ENCODE measurements at regions of chr3 and their contacts with region 1.

Region 1: DNA sequence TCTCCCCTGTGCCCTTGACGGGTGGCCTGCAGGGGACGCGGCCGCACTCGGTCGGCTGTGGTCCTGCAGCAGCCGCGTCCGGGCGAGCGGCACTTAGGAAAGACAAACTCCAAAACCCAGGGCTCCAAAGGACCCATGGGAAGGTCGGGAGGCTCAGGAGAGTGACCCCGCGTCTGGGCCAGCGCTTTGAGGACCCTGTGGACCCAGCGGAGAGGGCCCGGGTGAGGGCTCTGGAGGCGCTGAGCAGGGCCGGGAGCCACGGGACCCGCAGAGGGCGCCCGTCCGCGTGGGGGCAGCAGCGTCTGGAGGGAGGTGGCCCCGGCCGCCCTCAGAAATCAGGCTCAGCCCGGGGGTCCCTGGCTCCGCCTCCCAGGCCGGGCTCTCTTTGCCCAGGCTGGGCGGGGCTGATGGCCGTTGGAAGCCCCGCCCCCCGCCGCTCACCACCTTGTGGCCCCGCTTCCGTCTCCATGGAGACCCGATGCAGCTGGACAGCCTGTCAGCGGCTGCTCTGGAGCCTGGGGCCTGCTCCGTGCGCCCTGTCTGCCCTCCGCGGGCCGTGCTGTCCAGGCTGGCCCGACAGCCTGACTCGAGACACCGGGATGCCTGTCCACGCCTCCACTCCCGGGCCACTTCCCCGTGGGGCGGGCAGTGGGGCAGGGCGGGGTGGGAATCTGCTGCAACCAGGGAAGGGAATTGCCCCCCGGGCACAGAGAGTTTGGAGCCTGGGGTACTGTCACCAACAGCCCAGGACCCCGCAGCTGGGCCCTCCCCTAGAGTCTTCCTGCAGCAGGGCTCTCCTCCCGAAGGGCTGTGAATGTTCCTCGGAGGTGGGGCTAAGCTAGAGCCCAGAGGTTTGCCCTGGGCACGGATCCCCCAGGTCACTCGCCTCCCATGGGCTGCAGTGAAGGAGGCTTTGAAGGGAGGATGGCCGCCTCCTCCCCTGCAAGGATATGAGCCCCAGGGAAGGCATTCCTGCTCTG is 34.8 kb upstream of the RPL32 start:
- DNase-seq: peak; percentile 31 to 80 (median 68)
- ATAC-seq: peak in 3 of 4 donors; percentile 71 to 82 (median 74)
- H3K4me3 ChIP-seq: peak overlapping the region in 9 of 12 donors; percentile 15 to 47 (median 35)
- H3K27ac ChIP-seq: no peak overlapping the region
- H3K4me1 ChIP-seq: peaks cover 0 to 11% (median 6%) of the 10 kb centered on the region in 12 donors
- H3K27me3 ChIP-seq: peaks cover 0 to 4% (median 0%) of the 10 kb centered on the region in 9 donors
- CTCF ChIP-seq: peak in 11 of 12 donors; percentile 9 to 50 (median 31)
- POLR2A ChIP-seq: no peak

Region 2: DNA sequence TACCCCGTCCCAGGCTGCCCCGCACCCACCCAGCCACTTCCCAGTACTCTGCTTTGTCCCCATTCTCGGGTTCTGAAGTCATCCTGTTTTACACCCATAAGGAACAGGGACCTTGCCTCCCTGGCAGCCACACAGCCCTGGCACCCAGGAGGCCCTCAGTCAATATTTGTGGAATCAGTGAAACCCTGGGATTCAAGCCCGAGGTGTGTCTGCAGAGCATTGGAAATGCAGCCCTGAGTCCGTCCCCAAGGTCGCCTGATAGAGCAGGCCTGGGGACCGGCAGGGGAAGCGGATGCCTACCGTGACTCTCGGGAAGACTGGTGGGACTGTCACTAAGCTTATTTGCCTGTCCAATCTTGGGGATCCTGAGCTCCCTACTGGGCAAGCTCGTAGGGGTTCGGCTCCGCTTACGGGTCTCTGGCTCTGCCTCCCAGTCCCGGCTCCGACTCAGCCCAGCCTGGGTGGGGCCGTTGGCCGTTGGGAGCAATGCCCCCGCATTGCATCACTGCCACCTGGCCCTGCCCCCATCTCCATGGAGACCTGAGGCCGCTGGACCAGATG is 965.1 kb before region 1 on chr3:
- intact Hi-C with region 1: loop called in 1 of 10 experiments (anchors 10 kb)
- DNase-seq: no peak
- ATAC-seq: no peak
- H3K4me3 ChIP-seq: no peak overlapping the region
- H3K27ac ChIP-seq: no peak overlapping the region
- H3K4me1 ChIP-seq: peaks cover 0 to under 1% (median 0%) of the 10 kb centered on the region in 12 donors
- H3K27me3 ChIP-seq: no peaks in the 10 kb centered on the region
- CTCF ChIP-seq: no peak
- POLR2A ChIP-seq: no peak

Measured in heart left ventricle (tissue), 16 donors.